ENCODE measurements at regions of chr20 and their contacts with region 1.

Region 1: GRCh38 chr20:53413186-53413631 is 180.4 kb downstream of the ZNF217 start:
- DNase-seq: peak; percentile 85
- CTCF ChIP-seq: peak; percentile 82

Region 2: DNA sequence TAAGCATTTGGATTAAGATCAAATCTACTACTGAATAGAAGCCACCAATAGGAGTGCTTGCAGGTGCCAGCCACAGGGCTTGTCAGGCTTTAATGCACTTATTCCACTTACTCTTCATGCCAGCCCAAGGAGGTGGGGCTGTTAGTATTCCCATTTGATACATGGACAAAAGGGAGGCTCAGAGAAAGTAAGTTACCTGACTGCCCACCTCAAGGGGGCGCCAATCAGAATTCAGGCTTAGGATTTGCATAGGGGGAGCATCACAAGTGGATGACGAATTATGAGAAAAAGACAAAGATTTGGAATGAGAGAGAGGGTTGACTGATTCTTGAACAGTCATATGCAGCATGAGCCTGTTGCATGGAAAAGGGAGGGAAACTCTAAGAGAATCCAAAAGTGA is 629.4 kb before region 1 on chr20:
- in situ Hi-C with region 1: no loop called
- DNase-seq: no peak
- CTCF ChIP-seq: no peak

Region 3: GRCh38 chr20:53547664-53548239 is 134.5 kb after region 1 on chr20:
- in situ Hi-C with region 1: loop called (anchors 25 kb)
- DNase-seq: peak; percentile 71
- CTCF ChIP-seq: peak; percentile 50

Region 4: GRCh38 chr20:53750827-53751619 is 337.8 kb after region 1 on chr20:
- in situ Hi-C with region 1: no loop called
- DNase-seq: no peak
- CTCF ChIP-seq: no peak

Region 5: DNA sequence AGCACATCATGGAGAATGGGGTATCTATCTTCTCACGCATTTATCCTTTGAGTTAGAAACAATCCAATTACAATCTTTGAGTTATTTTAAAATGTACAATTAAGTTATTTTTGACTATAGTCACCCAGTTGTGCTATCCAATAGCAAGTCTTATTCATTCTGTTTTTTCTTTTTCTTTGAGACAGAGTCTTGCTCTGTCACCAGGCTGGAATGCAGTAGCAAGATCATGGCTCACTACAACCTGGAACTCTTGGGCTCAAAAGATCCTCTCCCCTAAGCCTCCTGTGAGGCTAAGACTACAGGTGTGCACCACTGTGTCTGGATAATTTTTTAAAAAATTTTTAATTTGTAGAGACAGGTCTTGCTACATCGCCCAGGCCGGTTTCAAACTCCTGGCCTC is 382.0 kb after region 1 on chr20:
- in situ Hi-C with region 1: no loop called
- DNase-seq: no peak
- CTCF ChIP-seq: no peak

Region 6: GRCh38 chr20:53939572-53940359 is 526.6 kb after region 1 on chr20:
- in situ Hi-C with region 1: loop called (anchors 10 kb)
- DNase-seq: peak; percentile 68
- CTCF ChIP-seq: peak; percentile 81

Region 7: GRCh38 chr20:54062812-54063280 is 649.6 kb after region 1 on chr20:
- in situ Hi-C with region 1: loop called (anchors 25 kb)
- DNase-seq: peak; percentile 60
- CTCF ChIP-seq: peak; percentile 20

Measured in GM13976 (cell line).